ENCODE measurements at regions of chr14 and their contacts with region 1.

Region 1: GRCh38 chr14:104563742-104564615 is 15.6 kb upstream of the C14orf180 start:
- DNase-seq: peak; percentile 47 to 51
- H3K4me3 ChIP-seq: no peak overlapping the region
- H3K27ac ChIP-seq: no peak overlapping the region
- H3K4me1 ChIP-seq: no peaks in the 10 kb centered on the region
- H3K27me3 ChIP-seq: peaks cover 0 to 9% of the 10 kb centered on the region in 2 donors
- CTCF ChIP-seq: peak; percentile 46 to 85 (median 76)
- POLR2A ChIP-seq: no peak

Region 2: GRCh38 chr14:104137297-104138097 is 426.5 kb before region 1 on chr14:
- intact Hi-C with region 1: loop called (anchors 10 kb)
- DNase-seq: peak; percentile 34 to 40
- H3K4me3 ChIP-seq: peak overlapping the region; percentile 13 to 50
- H3K27ac ChIP-seq: no peak overlapping the region
- H3K4me1 ChIP-seq: peaks cover 0 to 24% of the 10 kb centered on the region in 2 donors
- H3K27me3 ChIP-seq: no peaks in the 10 kb centered on the region
- CTCF ChIP-seq: peak; percentile 62 to 90 (median 79)
- POLR2A ChIP-seq: no peak

Region 3: GRCh38 chr14:104950021-104950420 is 386.0 kb after region 1 on chr14:
- intact Hi-C with region 1: no loop called
- DNase-seq: no peak
- H3K4me3 ChIP-seq: no peak overlapping the region
- H3K27ac ChIP-seq: no peak overlapping the region
- H3K4me1 ChIP-seq: no peaks in the 10 kb centered on the region
- H3K27me3 ChIP-seq: no peaks in the 10 kb centered on the region
- CTCF ChIP-seq: no peak
- POLR2A ChIP-seq: no peak

Measured in uterus (tissue), 4 donors.